ENCODE measurements at regions of chr9 and their contacts with region 1.

Region 1: DNA sequence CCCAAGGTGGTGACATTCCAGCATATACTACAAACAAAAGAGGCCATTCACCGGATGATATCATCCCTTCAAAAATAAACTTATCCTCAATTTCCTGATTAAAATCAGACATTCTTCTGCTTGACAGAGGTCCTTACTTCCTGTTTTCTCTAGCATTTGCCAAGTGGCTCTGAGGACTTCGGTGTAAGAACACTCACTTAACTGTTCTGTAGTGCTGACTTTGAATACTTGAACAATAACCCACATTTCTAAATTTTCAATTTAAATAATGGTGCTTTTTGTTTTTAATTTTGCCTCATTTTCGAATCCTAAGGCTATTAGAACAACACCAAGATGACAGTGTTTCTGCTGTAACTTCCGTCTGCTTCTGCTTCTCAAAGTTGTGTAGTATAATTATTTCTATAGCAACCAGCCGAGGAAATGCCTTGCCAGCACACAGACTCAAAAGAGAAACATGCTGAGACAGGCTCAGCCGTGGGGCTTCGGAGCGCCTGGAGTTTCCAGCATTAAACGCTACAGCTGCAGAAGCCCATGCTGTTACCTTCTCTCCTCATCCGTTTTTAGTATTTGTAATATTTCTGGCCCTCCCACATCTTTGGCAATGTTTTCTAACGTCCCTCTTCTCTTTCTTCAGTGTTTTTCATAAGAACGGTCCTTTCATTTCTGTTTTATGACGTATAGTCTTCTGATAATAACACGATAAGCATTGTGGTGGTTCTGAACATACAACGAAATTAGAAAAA is 19.5 kb upstream of the ANXA1 start:
- DNase-seq: peak; percentile 72 to 90
- ATAC-seq: peak; percentile 94 to 97 (median 97)
- H3K4me3 ChIP-seq: peak overlapping the region; percentile 82
- H3K4me3 Mint-ChIP-seq: peak overlapping the region; percentile 91
- H3K27ac ChIP-seq: peak overlapping the region; percentile 94
- H3K27ac Mint-ChIP-seq: peak overlapping the region; percentile 86 to 92
- H3K4me1 ChIP-seq: no peaks in the 10 kb centered on the region
- H3K4me1 Mint-ChIP-seq: peaks cover 6 to 10% of the 10 kb centered on the region in 2 donors
- H3K27me3 ChIP-seq: no peaks in the 10 kb centered on the region
- H3K27me3 Mint-ChIP-seq: no peaks in the 10 kb centered on the region
- CTCF ChIP-seq: no peak

Region 2: DNA sequence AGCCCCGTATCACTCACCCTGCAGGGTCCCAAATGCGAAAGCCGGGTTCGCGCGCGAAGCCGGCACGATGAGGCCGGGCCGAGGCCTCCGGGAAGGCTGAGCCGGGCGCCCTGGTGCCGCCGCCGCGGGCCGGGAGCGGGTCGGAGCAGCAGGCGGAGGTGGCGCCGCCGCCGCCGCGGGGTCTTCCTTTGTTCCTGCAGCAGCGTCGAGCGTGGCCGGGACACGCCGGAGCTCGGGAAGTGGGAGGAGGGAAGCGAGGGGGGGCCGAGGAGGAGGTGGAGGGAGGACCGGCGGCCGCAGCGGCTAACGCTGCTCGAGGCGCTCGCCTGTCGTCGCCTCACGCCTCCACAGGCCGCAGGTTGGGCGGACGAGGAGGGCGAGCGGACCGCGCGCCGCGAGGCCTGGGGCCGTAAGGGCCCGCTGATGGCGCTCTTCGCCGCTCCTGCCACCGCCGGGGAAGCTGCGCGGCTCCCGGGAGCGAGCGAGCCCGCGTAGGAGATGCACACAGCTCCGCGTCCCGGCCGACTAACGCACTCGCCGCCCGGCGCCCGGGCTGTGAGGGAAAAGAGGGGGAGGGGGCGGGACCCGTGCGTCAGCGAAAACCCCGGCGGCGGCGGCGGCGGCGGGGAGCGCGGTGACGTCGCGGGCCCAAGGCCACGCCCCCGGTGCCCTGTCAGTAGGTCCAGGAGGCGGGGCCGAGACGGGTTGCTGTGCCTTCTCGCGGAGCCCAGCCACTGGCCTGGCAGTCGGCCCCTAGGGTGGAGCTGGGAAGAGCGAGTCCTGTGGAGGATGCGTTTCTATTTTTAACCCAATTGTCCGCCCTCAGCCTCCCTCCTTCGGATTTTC is 767.3 kb before region 1 on chr9 and contains the start of gene ZFAND5:
- intact Hi-C with region 1: loop called (anchors 5 kb)
- DNase-seq: peak; percentile 97
- ATAC-seq: peak; percentile 80 to 93 (median 82)
- H3K4me3 ChIP-seq: peak within 1 kb of the TSS; percentile 76
- H3K4me3 Mint-ChIP-seq: peak within 1 kb of the TSS; percentile 94
- H3K27ac ChIP-seq: peak within 1 kb of the TSS; percentile 99
- H3K27ac Mint-ChIP-seq: peak within 1 kb of the TSS; percentile 99
- H3K4me1 ChIP-seq: peaks cover 14% of the 10 kb centered on the region
- H3K4me1 Mint-ChIP-seq: peaks cover 47 to 51% of the 10 kb centered on the region in 2 donors
- H3K27me3 ChIP-seq: no peaks in the 10 kb centered on the region
- H3K27me3 Mint-ChIP-seq: no peaks in the 10 kb centered on the region
- CTCF ChIP-seq: no peak
- total RNA-seq, gene ZFAND5: 307 to 450 (median 318) TPM

Region 3: DNA sequence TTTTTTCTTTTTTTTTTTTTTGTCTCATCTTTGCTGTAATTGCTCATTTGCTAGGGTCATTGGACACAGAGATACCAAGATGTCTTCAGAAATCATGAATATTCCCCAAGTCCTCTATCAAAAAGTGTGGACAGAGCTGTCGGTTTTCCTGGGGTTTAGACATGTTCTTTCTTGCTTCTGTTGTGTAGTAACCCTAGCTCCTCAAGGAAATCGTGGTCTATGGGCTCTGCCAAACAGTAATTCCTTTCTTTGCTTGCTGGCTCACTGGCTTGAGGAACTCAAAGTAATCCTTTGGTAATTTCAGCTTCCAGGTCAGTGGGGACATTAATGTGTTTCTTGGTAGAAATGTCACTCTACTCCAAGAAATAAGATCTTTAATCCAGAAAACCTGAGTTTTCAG is 509.0 kb before region 1 on chr9:
- intact Hi-C with region 1: no loop called
- DNase-seq: no peak
- ATAC-seq: no peak
- H3K4me3 ChIP-seq: no peak overlapping the region
- H3K4me3 Mint-ChIP-seq: no peak overlapping the region
- H3K27ac ChIP-seq: no peak overlapping the region
- H3K27ac Mint-ChIP-seq: no peak overlapping the region
- H3K4me1 ChIP-seq: no peaks in the 10 kb centered on the region
- H3K4me1 Mint-ChIP-seq: no peaks in the 10 kb centered on the region
- H3K27me3 ChIP-seq: peaks cover 2% of the 10 kb centered on the region
- H3K27me3 Mint-ChIP-seq: peaks cover 3 to 11% of the 10 kb centered on the region in 2 donors
- CTCF ChIP-seq: no peak

Region 4: GRCh38 chr9:73167614-73168013 is 35.4 kb after region 1 on chr9:
- intact Hi-C with region 1: loop called (anchors 5 kb)
- DNase-seq: no peak
- ATAC-seq: peak; percentile 75 to 82 (median 77)
- H3K4me3 ChIP-seq: no peak overlapping the region
- H3K4me3 Mint-ChIP-seq: no peak overlapping the region
- H3K27ac ChIP-seq: peak overlapping the region; percentile 61
- H3K27ac Mint-ChIP-seq: peak overlapping the region; percentile 80 to 81
- H3K4me1 ChIP-seq: peaks cover 3% of the 10 kb centered on the region
- H3K4me1 Mint-ChIP-seq: peaks cover 22 to 26% of the 10 kb centered on the region in 2 donors
- H3K27me3 ChIP-seq: no peaks in the 10 kb centered on the region
- H3K27me3 Mint-ChIP-seq: no peaks in the 10 kb centered on the region
- CTCF ChIP-seq: no peak

Region 5: GRCh38 chr9:73474625-73475024 is 342.4 kb after region 1 on chr9:
- intact Hi-C with region 1: no loop called
- DNase-seq: no peak
- ATAC-seq: no peak
- H3K4me3 ChIP-seq: no peak overlapping the region
- H3K4me3 Mint-ChIP-seq: no peak overlapping the region
- H3K27ac ChIP-seq: no peak overlapping the region
- H3K27ac Mint-ChIP-seq: no peak overlapping the region
- H3K4me1 ChIP-seq: no peaks in the 10 kb centered on the region
- H3K4me1 Mint-ChIP-seq: no peaks in the 10 kb centered on the region
- H3K27me3 ChIP-seq: no peaks in the 10 kb centered on the region
- H3K27me3 Mint-ChIP-seq: no peaks in the 10 kb centered on the region
- CTCF ChIP-seq: no peak